ENCODE measurements at regions of chr19 and their contacts with region 1.

Region 1: DNA sequence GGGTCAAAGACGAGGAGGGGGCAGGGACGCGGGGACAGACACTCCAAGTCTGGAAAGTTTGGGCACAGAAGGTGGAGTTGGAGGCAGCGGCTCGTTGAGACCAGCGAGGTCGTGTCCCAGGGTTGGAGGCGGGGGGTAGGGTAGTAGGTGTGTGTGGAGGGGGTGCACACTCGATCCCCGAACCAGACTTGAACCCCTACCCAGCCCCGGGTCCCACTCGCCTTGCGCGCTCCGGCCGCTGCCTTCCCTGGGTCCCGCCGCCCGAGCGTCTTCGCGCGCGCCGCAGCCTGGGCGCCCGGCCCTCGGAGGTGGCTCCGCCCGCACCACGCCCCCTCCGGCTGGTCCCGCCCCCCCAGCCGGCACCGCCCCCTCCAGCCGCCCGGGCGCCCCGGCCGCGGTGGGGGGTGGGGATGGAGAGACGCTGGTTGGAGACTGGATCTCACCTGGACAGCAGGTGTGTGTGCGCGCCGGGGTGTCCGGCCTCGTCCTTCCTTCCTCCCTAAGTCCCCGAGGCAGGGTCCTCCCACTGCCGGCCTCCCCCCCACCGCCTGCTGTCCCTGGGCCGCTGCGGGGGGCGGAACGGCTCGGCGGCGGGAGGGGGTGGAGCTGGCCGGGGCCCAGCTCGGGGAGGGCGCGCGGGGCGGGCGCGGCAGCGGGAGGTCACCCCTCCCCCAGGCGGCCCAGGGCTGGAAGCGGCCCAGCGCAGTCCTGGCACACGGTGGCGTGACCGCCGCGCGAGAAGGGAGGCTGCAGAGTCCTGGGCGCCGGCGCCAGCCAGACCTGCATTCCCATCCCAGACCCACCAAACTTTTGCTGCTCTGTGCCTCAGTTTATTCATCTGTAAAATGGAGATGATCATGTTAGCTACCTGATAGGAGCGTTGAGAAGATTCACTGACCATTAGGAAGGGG is at the start of gene KANK2:
- DNase-seq: peak; percentile 82 to 91
- ATAC-seq: peak; percentile 78 to 93 (median 86)
- H3K4me3 ChIP-seq: peak within 1 kb of the TSS; percentile 57 to 88 (median 66)
- H3K27ac ChIP-seq: peak within 1 kb of the TSS; percentile 82 to 98 (median 90)
- H3K4me1 ChIP-seq: peaks cover 16 to 64% (median 49%) of the 10 kb centered on the region in 9 donors
- H3K27me3 ChIP-seq: peaks cover 0 to 7% (median 0%) of the 10 kb centered on the region in 7 donors
- CTCF ChIP-seq: peak in 3 of 9 donors; percentile 31 to 34 (median 32)
- total RNA-seq, gene KANK2: 243 to 355 (median 307) TPM

Region 2: GRCh38 chr19:11148001-11148400 is 49.5 kb before region 1 on chr19:
- intact Hi-C with region 1: loop called in 2 of 10 experiments (anchors 2 to 5 kb)
- DNase-seq: no peak
- ATAC-seq: no peak
- H3K4me3 ChIP-seq: no peak overlapping the region
- H3K27ac ChIP-seq: peak overlapping the region in 1 of 10 donors; percentile 3
- H3K4me1 ChIP-seq: peaks cover 11 to 36% (median 25%) of the 10 kb centered on the region in 9 donors
- H3K27me3 ChIP-seq: no peaks in the 10 kb centered on the region
- CTCF ChIP-seq: no peak

Region 3: GRCh38 chr19:11155373-11156120 is 42.0 kb before region 1 on chr19 and contains the start of gene SPC24:
- intact Hi-C with region 1: loop called in 4 of 10 experiments (anchors 5 kb)
- DNase-seq: peak; percentile 96
- ATAC-seq: peak; percentile 91 to 96 (median 94)
- H3K4me3 ChIP-seq: peak within 1 kb of the TSS in 9 of 10 donors; percentile 38 to 80 (median 54)
- H3K27ac ChIP-seq: peak within 1 kb of the TSS in 9 of 10 donors; percentile 57 to 89 (median 72)
- H3K4me1 ChIP-seq: peaks cover 10 to 73% (median 43%) of the 10 kb centered on the region in 9 donors
- H3K27me3 ChIP-seq: no peaks in the 10 kb centered on the region
- CTCF ChIP-seq: peak in 2 of 9 donors; percentile 12 to 20
- total RNA-seq, gene SPC24: 1.6 to 8.5 (median 3.2) TPM

Measured in heart right ventricle (tissue), 16 donors.